ENCODE measurements at regions of chr1 and their contacts with region 1.

Region 1: DNA sequence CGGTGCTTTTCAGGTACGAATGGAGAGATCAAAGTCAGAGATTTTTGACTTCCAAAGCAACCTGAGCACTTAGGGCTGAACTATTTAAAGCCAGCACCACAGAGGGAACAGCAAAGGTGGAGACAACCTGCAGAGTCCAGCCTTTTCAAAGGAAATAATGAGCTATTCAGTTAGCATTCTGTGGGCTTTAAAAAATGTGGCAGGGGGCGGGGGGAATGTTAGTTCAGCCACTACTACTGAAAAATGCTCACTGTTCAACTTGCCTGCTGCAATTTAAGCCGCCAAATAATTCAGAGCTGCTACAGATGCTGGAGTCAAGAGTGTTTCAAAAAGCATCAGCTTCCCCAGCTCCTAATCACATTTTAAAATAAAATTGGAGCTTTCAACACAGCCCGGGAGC is 473.3 kb upstream of the PLXNA2 start:
- DNase-seq: no peak
- H3K4me3 ChIP-seq: no peak overlapping the region
- H3K27ac ChIP-seq: no peak overlapping the region
- H3K4me1 ChIP-seq: no peaks in the 10 kb centered on the region
- H3K27me3 ChIP-seq: peaks cover 17% of the 10 kb centered on the region
- CTCF ChIP-seq: no peak

Region 2: DNA sequence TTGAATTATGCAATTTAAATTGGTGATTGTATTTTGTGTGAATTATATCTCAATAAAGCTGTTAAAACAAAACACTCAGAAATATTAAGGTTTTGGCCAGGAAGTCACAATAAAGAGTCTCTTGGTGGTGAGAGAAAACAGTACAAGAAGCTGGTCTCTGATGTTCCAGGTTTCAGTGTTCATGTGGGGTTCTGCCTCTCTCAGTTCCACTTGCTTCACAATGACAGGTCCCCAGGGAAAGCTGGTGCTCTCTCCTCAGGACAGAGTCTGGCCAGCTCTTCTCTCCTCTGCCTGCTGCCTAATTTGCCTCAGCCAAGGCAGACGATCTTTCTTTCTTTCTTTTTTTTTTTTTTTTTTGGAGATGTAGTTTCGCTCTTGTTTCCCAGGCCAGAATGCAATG is 130.4 kb before region 1 on chr1:
- CTCF ChIA-PET with region 1: no interaction called
- dilution Hi-C with region 1: no loop called
- in situ Hi-C with region 1: no loop called
- intact Hi-C with region 1: no loop called
- DNase-seq: no peak
- H3K4me3 ChIP-seq: no peak overlapping the region
- H3K27ac ChIP-seq: no peak overlapping the region
- H3K4me1 ChIP-seq: no peaks in the 10 kb centered on the region
- H3K27me3 ChIP-seq: peaks cover 2% of the 10 kb centered on the region
- CTCF ChIP-seq: no peak

Region 3: DNA sequence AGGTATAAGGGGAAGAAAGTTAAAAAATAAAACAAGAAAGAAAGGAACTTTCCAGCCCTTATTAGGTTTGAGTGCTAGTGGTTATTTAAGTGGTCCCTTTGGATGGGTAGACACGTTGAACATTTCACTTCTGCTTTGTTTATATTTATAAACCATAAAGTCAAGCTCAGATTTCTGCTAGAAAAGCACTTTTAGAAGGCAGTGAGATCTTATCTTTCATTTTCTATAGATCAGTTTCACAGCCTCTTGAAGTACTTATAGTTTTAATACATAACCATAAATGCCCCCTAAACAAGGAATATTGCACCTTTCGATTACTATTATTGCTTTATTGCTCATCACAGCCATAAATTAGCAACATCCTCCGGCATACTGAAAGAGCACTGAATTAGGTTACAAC is 26.5 kb before region 1 on chr1:
- CTCF ChIA-PET with region 1: no interaction called
- dilution Hi-C with region 1: no loop called
- in situ Hi-C with region 1: no loop called
- intact Hi-C with region 1: no loop called
- DNase-seq: no peak
- H3K4me3 ChIP-seq: no peak overlapping the region
- H3K27ac ChIP-seq: no peak overlapping the region
- H3K4me1 ChIP-seq: no peaks in the 10 kb centered on the region
- H3K27me3 ChIP-seq: peaks cover 8% of the 10 kb centered on the region
- CTCF ChIP-seq: no peak

Region 4: GRCh38 chr1:208834381-208835096 is 117.0 kb after region 1 on chr1:
- CTCF ChIA-PET with region 1: no interaction called
- dilution Hi-C with region 1: no loop called
- in situ Hi-C with region 1: no loop called
- intact Hi-C with region 1: no loop called
- DNase-seq: no peak
- H3K4me3 ChIP-seq: no peak overlapping the region
- H3K27ac ChIP-seq: no peak overlapping the region
- H3K4me1 ChIP-seq: peaks cover 11% of the 10 kb centered on the region
- H3K27me3 ChIP-seq: no peaks in the 10 kb centered on the region
- CTCF ChIP-seq: no peak

Region 5: GRCh38 chr1:209101106-209101505 is 383.6 kb after region 1 on chr1:
- CTCF ChIA-PET with region 1: interaction called, 19 read pairs
- dilution Hi-C with region 1: no loop called
- in situ Hi-C with region 1: no loop called
- intact Hi-C with region 1: no loop called
- DNase-seq: no peak
- H3K4me3 ChIP-seq: no peak overlapping the region
- H3K27ac ChIP-seq: no peak overlapping the region
- H3K4me1 ChIP-seq: peaks cover 8% of the 10 kb centered on the region
- H3K27me3 ChIP-seq: no peaks in the 10 kb centered on the region
- CTCF ChIP-seq: no peak